Left lung (tissue), 14 donors: ENCODE measurements at regions of chr2 and their contacts with region 1.

Region 1: DNA sequence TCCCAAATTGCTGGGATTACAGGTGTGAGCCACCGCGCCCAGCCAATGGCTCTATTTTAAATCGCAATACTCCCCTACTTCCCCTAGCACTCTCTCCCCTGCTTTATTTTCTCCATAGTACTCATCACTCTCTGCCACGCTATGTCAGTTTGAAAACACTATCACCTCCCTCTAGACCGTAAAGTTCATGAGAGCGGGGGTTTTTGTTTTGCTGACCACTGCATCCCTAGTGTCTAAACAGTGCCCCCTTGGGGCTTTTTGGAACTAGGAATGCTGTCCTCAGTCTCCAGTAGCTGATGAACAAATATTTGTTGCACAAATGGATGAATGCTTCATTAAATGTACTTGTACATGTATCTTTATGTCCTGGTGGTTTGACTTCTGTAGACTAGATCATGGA is 44.1 kb downstream of the ATOH8 start:
- DNase-seq: no peak
- ATAC-seq: peak; percentile 46
- H3K4me3 ChIP-seq: no peak overlapping the region
- H3K27ac ChIP-seq: no peak overlapping the region
- H3K4me1 ChIP-seq: peaks cover 9 to 36% of the 10 kb centered on the region in 2 donors
- H3K27me3 ChIP-seq: no peaks in the 10 kb centered on the region
- CTCF ChIP-seq: peak; percentile 15 to 44

Region 2: GRCh38 chr2:85728883-85729824 is 68.8 kb before region 1 on chr2:
- intact Hi-C with region 1: loop called in 1 of 2 experiments (anchors 5 kb)
- DNase-seq: peak; percentile 82 to 97 (median 90)
- ATAC-seq: peak; percentile 98
- H3K4me3 ChIP-seq: no peak overlapping the region
- H3K27ac ChIP-seq: peak overlapping the region; percentile 26 to 65
- H3K4me1 ChIP-seq: peaks cover 17 to 41% of the 10 kb centered on the region in 2 donors
- H3K27me3 ChIP-seq: no peaks in the 10 kb centered on the region
- CTCF ChIP-seq: peak; percentile 91 to 93